PC-3 (cell line): ENCODE measurements at regions of chr7 and their contacts with region 1.

Region 1: GRCh38 chr7:107201795-107202450 is 33.1 kb downstream of the HBP1 start:
- DNase-seq: peak; percentile 80
- ATAC-seq: peak; percentile 87
- H3K4me3 ChIP-seq: no peak overlapping the region
- H3K27ac ChIP-seq: no peak overlapping the region
- H3K4me1 ChIP-seq: peaks cover 11% of the 10 kb centered on the region
- H3K27me3 ChIP-seq: no peaks in the 10 kb centered on the region
- CTCF ChIP-seq: peak; percentile 81

Region 2: DNA sequence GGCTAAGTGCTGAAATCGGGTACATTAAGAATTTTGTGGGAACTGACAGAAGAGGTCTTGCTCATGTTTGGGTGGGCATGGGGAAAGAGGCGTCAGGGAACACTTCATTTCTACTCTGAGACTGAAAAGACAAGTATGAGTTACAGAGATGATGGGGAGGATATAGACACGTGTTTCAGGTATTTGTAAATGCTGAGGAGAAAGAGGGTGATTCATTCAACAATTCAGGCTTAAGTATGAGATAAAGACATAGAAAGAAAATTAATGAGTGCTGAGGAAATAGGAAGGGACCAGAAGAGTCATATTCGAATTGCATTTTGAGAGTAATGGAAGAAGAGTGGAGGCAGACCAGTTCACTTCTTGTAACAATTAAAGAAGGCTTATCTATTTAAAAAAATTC is 110.5 kb after region 1 on chr7:
- CTCF ChIA-PET with region 1: no interaction called
- POLR2A ChIA-PET with region 1: interaction called, 3 read pairs
- intact Hi-C with region 1: loop called (anchors 5 kb)
- DNase-seq: peak; percentile 5
- ATAC-seq: no peak
- H3K4me3 ChIP-seq: no peak overlapping the region
- H3K27ac ChIP-seq: no peak overlapping the region
- H3K4me1 ChIP-seq: no peaks in the 10 kb centered on the region
- H3K27me3 ChIP-seq: no peaks in the 10 kb centered on the region
- CTCF ChIP-seq: no peak

Region 3: GRCh38 chr7:107372298-107372697 is 170.4 kb after region 1 on chr7:
- CTCF ChIA-PET with region 1: interaction called, 3 read pairs
- POLR2A ChIA-PET with region 1: no interaction called
- intact Hi-C with region 1: loop called (anchors 5 kb)
- DNase-seq: peak; percentile 57
- ATAC-seq: peak; percentile 96
- H3K4me3 ChIP-seq: no peak overlapping the region
- H3K27ac ChIP-seq: peak overlapping the region; percentile 24
- H3K4me1 ChIP-seq: peaks cover 17% of the 10 kb centered on the region
- H3K27me3 ChIP-seq: no peaks in the 10 kb centered on the region
- CTCF ChIP-seq: no peak

Region 4: DNA sequence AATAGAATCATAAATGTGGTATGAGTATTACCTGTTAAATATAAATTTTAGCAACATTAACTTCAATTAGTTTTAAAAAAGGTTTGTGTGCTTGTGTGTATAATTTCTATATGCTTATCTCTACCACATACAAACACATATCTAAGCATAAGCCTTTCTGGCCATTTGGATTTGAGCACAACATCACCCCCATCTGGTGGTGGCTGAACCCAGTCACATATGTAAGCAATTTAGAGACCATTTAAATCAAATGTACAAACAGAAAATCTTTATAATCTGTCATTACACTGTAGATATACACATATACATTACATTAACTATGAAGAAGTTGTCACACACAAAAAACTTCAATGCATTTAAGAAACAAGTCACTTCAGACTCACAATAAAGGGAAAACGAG is 299.7 kb after region 1 on chr7:
- CTCF ChIA-PET with region 1: no interaction called
- POLR2A ChIA-PET with region 1: no interaction called
- intact Hi-C with region 1: loop called (anchors 1 kb)
- DNase-seq: peak; percentile 59
- ATAC-seq: peak; percentile 48; the same call in 1 of the 2 replicates
- H3K4me3 ChIP-seq: no peak overlapping the region
- H3K27ac ChIP-seq: no peak overlapping the region
- H3K4me1 ChIP-seq: peaks cover 14% of the 10 kb centered on the region
- H3K27me3 ChIP-seq: no peaks in the 10 kb centered on the region
- CTCF ChIP-seq: peak; percentile 74

Region 5: GRCh38 chr7:107725151-107725740 is 523.3 kb after region 1 on chr7:
- CTCF ChIA-PET with region 1: no interaction called
- POLR2A ChIA-PET with region 1: no interaction called
- intact Hi-C with region 1: loop called (anchors 1 kb)
- DNase-seq: peak; percentile 84
- ATAC-seq: peak; percentile 63
- H3K4me3 ChIP-seq: no peak overlapping the region
- H3K27ac ChIP-seq: no peak overlapping the region
- H3K4me1 ChIP-seq: no peaks in the 10 kb centered on the region
- H3K27me3 ChIP-seq: no peaks in the 10 kb centered on the region
- CTCF ChIP-seq: peak; percentile 77